ENCODE measurements at regions of chr1 and their contacts with region 1.

Region 1: GRCh38 chr1:162062542-162063015 is 6.9 kb upstream of the NOS1AP start:
- DNase-seq: peak; percentile 96
- H3K4me3 ChIP-seq: no peak overlapping the region
- CTCF ChIP-seq: no peak

Region 2: DNA sequence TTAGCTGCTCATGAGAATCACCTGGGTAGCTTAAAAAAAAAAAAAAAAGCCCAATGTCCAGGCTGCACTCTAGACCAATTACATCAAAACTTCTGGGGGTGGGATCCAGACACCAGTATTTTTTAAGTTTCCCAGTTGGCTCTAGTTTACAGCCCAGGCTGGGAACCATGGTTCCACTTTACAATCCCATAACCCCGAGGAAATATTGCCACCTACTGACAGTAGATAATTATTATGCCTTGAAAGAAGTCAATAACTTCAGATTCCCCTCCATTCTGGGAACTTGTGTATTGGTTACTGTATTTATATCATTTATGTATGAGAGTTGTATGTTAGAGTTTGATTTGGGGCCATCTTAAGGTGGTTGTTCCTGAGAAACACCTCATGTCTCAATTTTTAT is 213.9 kb after region 1 on chr1:
- in situ Hi-C with region 1: loop called (anchors 5 kb)
- DNase-seq: peak; percentile 41
- H3K4me3 ChIP-seq: no peak overlapping the region
- CTCF ChIP-seq: peak; percentile 47

Measured in astrocyte of the cerebellum (primary cell).